ENCODE measurements at regions of chr4 and their contacts with region 1.

Region 1: GRCh38 chr4:88823058-88823919 is 125.7 kb upstream of the NAP1L5 start:
- DNase-seq: peak; percentile 97
- H3K4me3 ChIP-seq: peak overlapping the region; percentile 43 to 60 (median 52)
- H3K27ac ChIP-seq: peak overlapping the region; percentile 82 to 92 (median 88)
- H3K4me1 ChIP-seq: peaks cover 0 to 43% (median 35%) of the 10 kb centered on the region in 4 donors
- H3K27me3 ChIP-seq: no peaks in the 10 kb centered on the region
- CTCF ChIP-seq: no peak
- EP300 ChIP-seq: peak in 2 of 4 donors; percentile 6 to 65
- POLR2A ChIP-seq: peak; percentile 49 to 75

Region 2: GRCh38 chr4:88398381-88398780 is 424.9 kb before region 1 on chr4:
- intact Hi-C with region 1: no loop called
- DNase-seq: no peak
- H3K4me3 ChIP-seq: no peak overlapping the region
- H3K27ac ChIP-seq: no peak overlapping the region
- H3K4me1 ChIP-seq: no peaks in the 10 kb centered on the region
- H3K27me3 ChIP-seq: no peaks in the 10 kb centered on the region
- CTCF ChIP-seq: no peak
- EP300 ChIP-seq: no peak
- POLR2A ChIP-seq: no peak

Region 3: GRCh38 chr4:88706574-88706973 is 116.7 kb before region 1 on chr4:
- intact Hi-C with region 1: loop called (anchors 5 kb)
- DNase-seq: no peak
- H3K4me3 ChIP-seq: no peak overlapping the region
- H3K27ac ChIP-seq: peak overlapping the region; percentile 43 to 67 (median 60)
- H3K4me1 ChIP-seq: peaks cover 0 to 18% (median 14%) of the 10 kb centered on the region in 4 donors
- H3K27me3 ChIP-seq: no peaks in the 10 kb centered on the region
- CTCF ChIP-seq: peak; percentile 20 to 50 (median 38)
- EP300 ChIP-seq: no peak
- POLR2A ChIP-seq: no peak

Region 4: DNA sequence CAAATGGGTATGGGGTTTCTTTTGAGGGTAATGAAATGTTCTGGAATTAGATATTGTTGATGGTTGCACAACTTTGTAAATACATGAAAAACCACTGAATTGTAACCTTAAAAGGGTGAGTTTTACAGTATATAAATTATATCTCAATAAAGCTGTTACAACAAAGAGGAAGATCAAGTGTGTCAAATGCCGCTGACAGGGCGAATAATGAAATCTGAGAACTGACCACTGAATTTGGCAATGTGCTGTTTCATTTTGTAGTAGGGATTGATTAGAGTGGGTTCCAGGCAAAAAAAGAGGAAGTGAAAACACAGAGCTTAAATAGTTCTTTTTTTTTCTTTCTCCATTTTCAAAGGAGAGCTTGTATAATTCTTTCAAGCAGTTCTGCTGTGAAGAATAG is 35.5 kb after region 1 on chr4:
- intact Hi-C with region 1: loop called (anchors 5 kb)
- DNase-seq: no peak
- H3K4me3 ChIP-seq: no peak overlapping the region
- H3K27ac ChIP-seq: peak overlapping the region in 1 of 4 donors; percentile 22
- H3K4me1 ChIP-seq: peaks cover 0 to 18% (median 15%) of the 10 kb centered on the region in 4 donors
- H3K27me3 ChIP-seq: no peaks in the 10 kb centered on the region
- CTCF ChIP-seq: no peak
- EP300 ChIP-seq: no peak
- POLR2A ChIP-seq: no peak

Region 5: GRCh38 chr4:88897180-88897579 is 73.9 kb after region 1 on chr4:
- intact Hi-C with region 1: no loop called
- DNase-seq: no peak
- H3K4me3 ChIP-seq: no peak overlapping the region
- H3K27ac ChIP-seq: no peak overlapping the region
- H3K4me1 ChIP-seq: no peaks in the 10 kb centered on the region
- H3K27me3 ChIP-seq: no peaks in the 10 kb centered on the region
- CTCF ChIP-seq: no peak
- EP300 ChIP-seq: no peak
- POLR2A ChIP-seq: no peak

Region 6: DNA sequence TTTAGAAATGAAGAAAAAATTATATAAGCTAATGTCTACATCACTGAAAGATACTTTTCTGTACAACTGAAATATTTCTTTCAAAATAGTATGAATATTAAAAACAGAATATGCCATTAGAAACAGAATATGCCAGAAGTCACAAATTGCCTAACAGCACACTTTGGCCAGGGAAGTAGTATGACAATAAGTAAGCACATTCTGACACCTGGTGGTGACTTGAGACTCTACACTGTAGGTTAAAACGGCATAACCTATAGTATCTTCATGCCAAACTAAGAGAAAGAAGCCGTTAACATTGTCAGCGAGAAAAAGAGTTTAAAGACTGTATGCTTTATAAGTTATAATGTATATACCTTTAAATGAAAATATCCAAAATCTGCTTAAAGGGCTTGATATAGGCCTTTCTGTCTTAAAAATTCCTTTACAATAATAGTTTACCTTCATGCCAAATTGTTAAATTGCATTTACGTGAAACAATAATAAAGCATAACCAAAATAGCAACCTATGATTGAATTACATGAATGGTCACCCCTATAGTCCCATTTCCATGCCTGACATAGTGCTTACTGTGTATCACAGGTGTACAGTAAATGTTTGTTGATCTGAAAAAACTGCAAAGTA is 200.9 kb after region 1 on chr4:
- intact Hi-C with region 1: loop called (anchors 1 kb)
- DNase-seq: peak; percentile 66
- H3K4me3 ChIP-seq: no peak overlapping the region
- H3K27ac ChIP-seq: no peak overlapping the region
- H3K4me1 ChIP-seq: peaks cover 0 to 5% (median 2%) of the 10 kb centered on the region in 4 donors
- H3K27me3 ChIP-seq: no peaks in the 10 kb centered on the region
- CTCF ChIP-seq: peak; percentile 77 to 92 (median 86)
- EP300 ChIP-seq: no peak
- POLR2A ChIP-seq: no peak

Region 7: DNA sequence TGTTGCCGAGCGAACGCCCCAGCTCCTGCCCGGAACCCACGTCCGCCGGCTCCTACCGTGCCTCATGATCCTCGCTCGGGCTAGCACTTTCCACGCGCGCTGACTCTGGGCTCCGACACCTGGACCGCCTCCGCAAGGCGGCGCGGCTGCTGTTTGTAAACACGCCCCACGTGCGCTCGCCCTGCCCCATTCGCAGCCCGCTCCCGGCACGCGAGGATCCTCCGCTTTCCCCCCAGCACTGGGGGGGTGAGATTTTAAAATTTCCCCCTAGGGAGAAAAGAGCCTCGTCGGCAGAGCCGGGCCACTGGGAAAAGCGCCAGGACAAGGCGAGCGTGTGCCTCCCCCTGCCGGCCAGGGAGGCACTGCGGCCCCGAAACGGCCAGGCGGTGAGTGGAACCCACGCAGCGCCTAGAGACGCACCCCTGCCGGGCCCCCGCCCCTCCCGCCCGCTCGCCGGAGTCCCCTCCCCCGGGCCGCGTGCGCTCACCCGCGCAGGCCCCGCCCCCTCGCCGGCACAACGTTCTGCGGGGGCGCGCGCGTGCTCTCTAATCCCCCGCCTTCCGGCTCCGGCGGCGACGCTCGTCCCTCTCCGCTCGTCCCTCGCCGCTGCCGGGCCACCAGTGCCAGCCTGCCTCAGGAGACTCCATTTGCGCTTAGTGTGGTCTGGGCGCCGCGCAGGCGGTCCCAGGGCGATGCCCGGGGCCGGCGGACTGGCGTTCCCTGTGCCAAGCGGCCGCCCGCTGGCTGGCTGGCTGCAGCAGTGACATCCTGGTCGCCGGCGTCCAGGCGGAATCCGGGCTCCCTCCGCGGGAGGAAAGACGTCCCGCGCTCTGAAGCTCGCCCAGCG is 287.9 kb after region 1 on chr4 and contains the start of gene TIGD2:
- intact Hi-C with region 1: loop called (anchors 2 kb)
- DNase-seq: peak; percentile 93
- H3K4me3 ChIP-seq: peak within 1 kb of the TSS; percentile 82 to 95 (median 90)
- H3K27ac ChIP-seq: peak within 1 kb of the TSS; percentile 82 to 87 (median 84)
- H3K4me1 ChIP-seq: peaks cover 0 to 20% (median 12%) of the 10 kb centered on the region in 4 donors
- H3K27me3 ChIP-seq: no peaks in the 10 kb centered on the region
- CTCF ChIP-seq: peak; percentile 77 to 83 (median 81)
- EP300 ChIP-seq: peak in 1 of 4 donors; percentile 16
- POLR2A ChIP-seq: peak in 1 of 2 donors; percentile 41
- total RNA-seq, gene TIGD2: 1.4 to 2.6 (median 1.5) TPM

Measured in sigmoid colon (tissue), 7 donors.